Activated CD8-positive, alpha-beta T cell treated with anti-CD3 and anti-CD28 coated beads for 36 hours (primary cell): ENCODE measurements at regions of chr6 and their contacts with region 1.

Region 1: DNA sequence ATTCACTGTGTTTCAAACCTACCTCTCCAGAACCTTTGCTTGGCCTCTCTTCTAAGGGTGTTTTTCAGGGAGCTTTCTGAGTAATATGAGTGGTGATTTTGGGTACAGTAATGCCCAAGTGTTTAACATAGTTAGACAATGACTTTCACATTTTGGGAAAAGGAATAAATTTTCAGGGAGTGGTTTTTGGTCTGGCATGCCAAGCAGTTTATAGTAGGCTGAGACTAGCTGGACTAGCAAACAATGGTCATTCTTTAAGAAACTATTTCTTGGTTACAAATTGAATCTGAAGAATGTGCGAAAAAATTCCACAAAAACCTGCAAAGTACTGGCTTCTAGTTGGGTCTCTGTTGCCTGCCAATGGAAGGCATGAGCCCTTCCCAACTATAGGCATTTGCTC is 15.4 kb downstream of the FNDC1 start:
- DNase-seq: no peak
- ATAC-seq: no peak
- H3K4me3 Mint-ChIP-seq: no peak overlapping the region
- H3K27ac Mint-ChIP-seq: no peak overlapping the region
- H3K4me1 Mint-ChIP-seq: peaks cover 6% of the 10 kb centered on the region
- H3K27me3 Mint-ChIP-seq: peaks cover 10% of the 10 kb centered on the region
- CTCF ChIP-seq: no peak

Region 2: DNA sequence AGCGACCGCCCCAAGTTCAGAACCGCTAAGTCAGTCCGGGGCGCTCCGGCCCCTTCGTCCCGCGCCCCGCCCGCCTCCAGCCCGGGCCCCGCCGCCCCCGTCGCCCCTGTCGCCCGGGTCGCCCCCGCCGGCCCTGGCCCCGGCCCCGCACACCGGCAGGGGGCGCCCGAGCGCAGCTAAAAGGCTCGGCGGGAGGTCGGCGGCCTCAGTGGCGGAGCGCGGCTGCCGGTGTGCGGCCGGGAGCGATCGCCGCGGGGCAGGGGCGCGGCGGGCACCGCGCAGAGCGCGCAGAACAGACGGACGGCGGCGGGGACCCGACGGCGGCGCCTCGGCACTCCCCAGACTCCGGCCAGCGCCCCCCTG is 15.4 kb before region 1 on chr6 and contains the start of gene FNDC1:
- CTCF ChIA-PET with region 1: interaction called, 56 read pairs
- POLR2A ChIA-PET with region 1: no interaction called
- intact Hi-C with region 1: no loop called
- DNase-seq: peak; percentile 67
- ATAC-seq: peak; percentile 85
- H3K4me3 Mint-ChIP-seq: peak within 1 kb of the TSS; percentile 51
- H3K27ac Mint-ChIP-seq: no peak within 1 kb of the TSS
- H3K4me1 Mint-ChIP-seq: peaks cover 8% of the 10 kb centered on the region
- H3K27me3 Mint-ChIP-seq: peaks cover 74% of the 10 kb centered on the region
- CTCF ChIP-seq: peak; percentile 13
- total RNA-seq, gene FNDC1: not detected

Region 3: DNA sequence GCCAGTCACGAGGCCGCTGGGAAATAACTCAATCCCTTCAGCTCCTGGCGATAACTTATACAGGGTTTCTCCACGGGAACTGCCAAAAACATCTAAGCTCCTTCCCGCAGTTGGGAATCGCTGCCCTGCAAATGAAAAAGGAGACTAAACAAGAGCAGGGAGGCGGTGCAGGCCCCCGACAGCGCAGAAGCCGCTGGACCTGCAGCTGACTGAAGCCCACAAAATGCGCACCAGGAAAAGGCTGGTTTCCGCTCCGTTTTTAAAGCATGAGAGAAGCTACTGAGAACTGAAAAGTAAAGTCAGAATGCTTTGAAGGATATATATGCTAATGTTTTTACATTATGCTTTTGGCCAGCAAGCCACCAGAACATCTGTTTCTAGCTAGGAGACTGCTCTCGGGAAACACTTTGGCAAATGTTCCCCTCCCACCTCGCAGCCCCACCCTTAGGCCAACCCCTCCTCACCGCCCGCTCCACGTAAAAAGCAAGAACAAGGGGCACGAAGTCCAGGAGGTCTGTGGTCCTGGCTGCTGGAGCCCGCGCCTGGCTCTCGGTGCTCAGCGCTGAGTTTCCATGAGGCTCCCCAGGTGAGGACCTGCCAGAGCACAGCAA is 418.0 kb after region 1 on chr6:
- CTCF ChIA-PET with region 1: no interaction called
- POLR2A ChIA-PET with region 1: no interaction called
- intact Hi-C with region 1: no loop called
- DNase-seq: no peak
- ATAC-seq: no peak
- H3K4me3 Mint-ChIP-seq: no peak overlapping the region
- H3K27ac Mint-ChIP-seq: no peak overlapping the region
- H3K4me1 Mint-ChIP-seq: no peaks in the 10 kb centered on the region
- H3K27me3 Mint-ChIP-seq: peaks cover 6% of the 10 kb centered on the region
- CTCF ChIP-seq: no peak